ENCODE measurements at regions of chr7 and their contacts with region 1.

Region 1: DNA sequence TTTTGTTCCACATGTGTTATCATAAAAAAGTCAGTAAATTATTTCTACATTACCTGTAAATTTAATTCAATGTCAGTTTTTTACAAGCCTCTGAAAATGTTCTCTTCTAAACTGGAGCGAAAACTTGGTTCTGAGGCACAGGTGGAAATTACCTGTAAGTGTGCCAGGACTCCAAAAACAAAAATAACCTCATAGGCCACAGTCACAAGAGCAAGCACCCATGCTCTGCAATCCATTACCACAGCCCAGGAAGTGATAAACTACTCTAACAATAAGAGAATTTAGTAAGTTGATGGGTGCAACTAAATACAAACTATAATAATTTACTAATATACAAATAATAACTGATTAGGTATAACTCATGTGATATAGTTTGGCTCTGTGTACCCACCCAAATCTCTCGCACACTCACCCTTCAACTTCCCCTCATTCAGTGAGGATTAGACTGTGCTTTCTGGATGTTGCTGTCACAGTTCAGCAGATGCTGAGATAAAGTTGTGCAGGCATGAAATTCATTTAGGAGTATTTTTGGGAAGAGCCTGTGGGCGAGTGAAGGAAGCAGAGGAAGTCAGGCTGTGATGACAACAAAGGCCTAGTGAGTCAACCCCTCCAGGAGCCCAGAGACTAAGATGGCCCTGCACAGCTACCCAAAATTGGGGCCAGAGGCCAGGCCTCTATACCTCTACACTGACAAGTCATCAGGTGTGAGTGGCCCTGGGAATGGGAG is 16.3 kb upstream of the GIMAP6 start:
- DNase-seq: no peak
- ATAC-seq: no peak
- H3K4me3 ChIP-seq: no peak overlapping the region
- H3K27ac ChIP-seq: no peak overlapping the region
- H3K4me1 ChIP-seq: no peaks in the 10 kb centered on the region
- H3K27me3 ChIP-seq: no peaks in the 10 kb centered on the region
- CTCF ChIP-seq: no peak
- POLR2A ChIP-seq: no peak
- RAD21 ChIP-seq: no peak

Region 2: GRCh38 chr7:150685219-150686029 is 36.9 kb after region 1 on chr7 and contains the start of gene GIMAP2:
- CTCF ChIA-PET with region 1: no interaction called
- POLR2A ChIA-PET with region 1: no interaction called
- dilution Hi-C with region 1: no loop called
- in situ Hi-C with region 1: no loop called
- intact Hi-C with region 1: loop called (anchors 1 kb)
- DNase-seq: no peak
- ATAC-seq: peak; percentile 76
- H3K4me3 ChIP-seq: peak within 1 kb of the TSS; percentile 38
- H3K27ac ChIP-seq: no peak within 1 kb of the TSS
- H3K4me1 ChIP-seq: no peaks in the 10 kb centered on the region; the same call in 1 of the 2 replicates
- H3K27me3 ChIP-seq: no peaks in the 10 kb centered on the region
- CTCF ChIP-seq: no peak
- POLR2A ChIP-seq: no peak
- RAD21 ChIP-seq: no peak
- total RNA-seq, gene GIMAP2: under 0.01 TPM in 1 of 2 replicates, not detected in the other

Measured in IMR-90 (cell line).